ENCODE measurements at regions of chr17 and their contacts with region 1.

Region 1: GRCh38 chr17:37047631-37048104 is 98.9 kb downstream of the AATF start:
- DNase-seq: peak; percentile 92
- ATAC-seq: peak; percentile 91
- H3K4me3 Mint-ChIP-seq: no peak overlapping the region
- H3K27ac Mint-ChIP-seq: no peak overlapping the region
- H3K4me1 Mint-ChIP-seq: peaks cover 12% of the 10 kb centered on the region
- H3K27me3 Mint-ChIP-seq: no peaks in the 10 kb centered on the region

Region 2: GRCh38 chr17:36500745-36501225 is 546.9 kb before region 1 on chr17:
- CTCF ChIA-PET with region 1: no interaction called
- POLR2A ChIA-PET with region 1: no interaction called
- intact Hi-C with region 1: no loop called
- DNase-seq: no peak
- ATAC-seq: no peak
- H3K4me3 Mint-ChIP-seq: no peak overlapping the region
- H3K27ac Mint-ChIP-seq: no peak overlapping the region
- H3K4me1 Mint-ChIP-seq: no peaks in the 10 kb centered on the region
- H3K27me3 Mint-ChIP-seq: no peaks in the 10 kb centered on the region

Region 3: DNA sequence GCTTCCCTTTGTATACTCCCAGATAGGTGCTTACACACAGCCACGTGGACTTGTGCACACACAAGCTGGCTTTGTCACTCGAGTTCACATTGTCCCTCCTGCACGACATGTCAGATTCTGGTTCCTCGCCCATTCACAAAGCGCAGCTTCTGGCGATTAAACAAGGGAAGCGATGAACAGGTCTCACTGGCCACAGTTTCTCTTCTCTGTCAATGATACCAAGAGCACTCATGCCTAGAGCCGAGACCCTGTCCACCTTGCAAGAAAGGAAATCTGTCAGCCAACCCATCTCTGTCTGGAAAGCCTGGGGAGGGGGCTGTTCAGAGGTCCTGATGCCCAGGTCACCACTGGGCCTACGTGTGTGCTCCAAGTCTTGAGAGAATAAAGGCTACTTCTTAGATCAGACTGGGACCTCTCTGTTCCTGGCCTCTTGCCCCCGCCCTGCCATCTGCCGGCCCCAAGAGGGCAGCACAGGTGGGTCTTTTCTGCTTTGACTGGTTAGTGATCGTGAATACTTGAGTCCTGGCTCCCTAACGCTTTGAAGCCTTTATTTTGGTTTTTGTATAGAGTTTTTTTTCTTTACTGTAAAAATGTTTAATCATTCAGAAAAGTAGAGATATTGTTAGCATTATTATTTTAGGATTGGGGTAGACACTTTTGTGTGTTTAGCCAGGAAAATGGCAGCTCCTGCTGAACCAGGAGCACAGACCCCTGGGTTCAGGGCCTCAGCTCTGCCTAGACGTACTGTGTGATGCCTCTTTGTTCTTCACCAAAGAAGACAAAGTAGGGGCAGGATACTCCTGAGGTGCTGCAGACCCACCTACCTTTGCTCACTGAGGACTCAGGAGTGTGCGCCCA is 341.6 kb before region 1 on chr17:
- CTCF ChIA-PET with region 1: interaction called, 18 read pairs
- POLR2A ChIA-PET with region 1: no interaction called
- intact Hi-C with region 1: loop called (anchors 2 to 5 kb)
- DNase-seq: peak; percentile 78
- ATAC-seq: peak; percentile 92
- H3K4me3 Mint-ChIP-seq: no peak overlapping the region
- H3K27ac Mint-ChIP-seq: no peak overlapping the region
- H3K4me1 Mint-ChIP-seq: no peaks in the 10 kb centered on the region
- H3K27me3 Mint-ChIP-seq: peaks cover 26% of the 10 kb centered on the region

Region 4: DNA sequence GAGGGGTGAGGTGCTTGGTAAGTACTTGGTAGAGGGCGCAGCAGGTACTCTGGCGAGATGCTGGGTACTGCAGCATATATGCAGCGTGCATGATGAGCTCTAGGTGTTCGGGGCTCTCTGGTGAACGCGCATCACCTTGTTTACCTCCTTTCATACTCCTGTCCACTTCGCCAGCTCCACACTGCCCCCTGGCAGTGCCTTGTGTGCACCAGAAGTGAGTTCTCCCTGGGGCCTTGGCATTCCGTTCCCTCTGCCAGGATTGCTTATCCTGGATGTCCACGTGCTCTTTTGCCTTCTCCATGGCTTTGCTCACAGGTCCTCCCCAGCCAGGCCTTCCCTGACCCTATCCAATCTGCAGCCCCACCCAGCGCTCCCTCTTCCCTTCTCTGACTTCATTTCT is 292.1 kb before region 1 on chr17:
- CTCF ChIA-PET with region 1: interaction called, 3 read pairs
- POLR2A ChIA-PET with region 1: no interaction called
- intact Hi-C with region 1: loop called in 1 of 2 experiments (anchors 1 kb)
- DNase-seq: peak; percentile 69
- ATAC-seq: peak; percentile 51
- H3K4me3 Mint-ChIP-seq: no peak overlapping the region
- H3K27ac Mint-ChIP-seq: no peak overlapping the region
- H3K4me1 Mint-ChIP-seq: no peaks in the 10 kb centered on the region
- H3K27me3 Mint-ChIP-seq: no peaks in the 10 kb centered on the region

Region 5: GRCh38 chr17:36849871-36850348 is 197.8 kb before region 1 on chr17:
- CTCF ChIA-PET with region 1: interaction called, 3 read pairs
- POLR2A ChIA-PET with region 1: no interaction called
- intact Hi-C with region 1: loop called in 1 of 2 experiments (anchors 10 kb)
- DNase-seq: peak; percentile 81
- ATAC-seq: peak; percentile 74
- H3K4me3 Mint-ChIP-seq: peak overlapping the region; percentile 50
- H3K27ac Mint-ChIP-seq: peak overlapping the region; percentile 78
- H3K4me1 Mint-ChIP-seq: peaks cover 39% of the 10 kb centered on the region
- H3K27me3 Mint-ChIP-seq: peaks cover 9% of the 10 kb centered on the region

Region 6: DNA sequence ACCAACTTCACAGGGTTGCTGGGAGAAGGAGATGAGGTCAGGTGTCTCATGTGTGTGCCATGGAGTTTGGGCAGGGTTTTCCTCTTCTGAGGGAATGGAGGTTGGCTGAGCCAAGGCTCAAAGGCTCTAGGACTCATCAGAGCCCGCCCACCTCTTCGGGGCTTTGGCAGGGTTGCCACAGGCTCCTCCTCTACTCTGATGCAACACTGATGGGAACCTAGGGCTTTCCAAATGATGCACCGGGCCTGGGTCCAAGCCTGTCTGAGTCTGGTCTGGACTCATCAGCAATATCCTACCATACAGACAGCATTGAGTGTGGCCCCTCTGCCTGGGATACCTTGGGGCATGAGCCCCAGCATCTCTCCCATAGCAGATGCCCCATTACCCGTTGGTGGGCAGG is 169.9 kb before region 1 on chr17:
- CTCF ChIA-PET with region 1: no interaction called
- POLR2A ChIA-PET with region 1: no interaction called
- intact Hi-C with region 1: no loop called
- DNase-seq: peak; percentile 36
- ATAC-seq: peak; percentile 39
- H3K4me3 Mint-ChIP-seq: no peak overlapping the region
- H3K27ac Mint-ChIP-seq: no peak overlapping the region
- H3K4me1 Mint-ChIP-seq: peaks cover 5% of the 10 kb centered on the region
- H3K27me3 Mint-ChIP-seq: peaks cover 28% of the 10 kb centered on the region

Region 7: DNA sequence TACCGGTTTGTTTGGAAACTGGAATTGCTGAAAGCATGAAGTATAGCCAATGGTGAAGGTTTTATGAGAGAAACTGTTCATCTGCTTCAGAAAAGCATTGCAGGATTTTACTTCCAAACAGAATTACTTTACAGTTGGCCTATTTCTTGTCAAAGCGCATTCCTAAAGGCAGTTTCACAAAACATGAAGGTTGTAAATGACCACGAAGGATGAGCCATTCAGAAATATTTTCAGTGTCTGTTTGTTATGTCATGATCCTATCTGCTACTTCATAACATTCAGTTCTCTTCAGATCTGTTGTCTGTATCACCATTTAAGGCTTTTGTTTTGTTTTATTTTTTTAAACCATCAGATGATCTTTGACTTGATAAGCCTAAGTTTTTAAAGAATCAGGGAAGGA is 53.2 kb before region 1 on chr17:
- CTCF ChIA-PET with region 1: no interaction called
- POLR2A ChIA-PET with region 1: no interaction called
- intact Hi-C with region 1: no loop called
- DNase-seq: no peak
- ATAC-seq: no peak
- H3K4me3 Mint-ChIP-seq: no peak overlapping the region
- H3K27ac Mint-ChIP-seq: no peak overlapping the region
- H3K4me1 Mint-ChIP-seq: no peaks in the 10 kb centered on the region
- H3K27me3 Mint-ChIP-seq: no peaks in the 10 kb centered on the region

Region 8: GRCh38 chr17:37059493-37059892 is 11.8 kb after region 1 on chr17:
- CTCF ChIA-PET with region 1: interaction called, 10 read pairs
- POLR2A ChIA-PET with region 1: no interaction called
- intact Hi-C with region 1: no loop called
- DNase-seq: no peak
- ATAC-seq: no peak
- H3K4me3 Mint-ChIP-seq: no peak overlapping the region
- H3K27ac Mint-ChIP-seq: no peak overlapping the region
- H3K4me1 Mint-ChIP-seq: no peaks in the 10 kb centered on the region
- H3K27me3 Mint-ChIP-seq: no peaks in the 10 kb centered on the region

Region 9: GRCh38 chr17:37067555-37068111 is 20.0 kb after region 1 on chr17:
- CTCF ChIA-PET with region 1: interaction called, 13 read pairs
- POLR2A ChIA-PET with region 1: interaction called, 3 read pairs
- intact Hi-C with region 1: no loop called
- DNase-seq: no peak
- ATAC-seq: no peak
- H3K4me3 Mint-ChIP-seq: no peak overlapping the region
- H3K27ac Mint-ChIP-seq: no peak overlapping the region
- H3K4me1 Mint-ChIP-seq: no peaks in the 10 kb centered on the region
- H3K27me3 Mint-ChIP-seq: no peaks in the 10 kb centered on the region

Region 10: DNA sequence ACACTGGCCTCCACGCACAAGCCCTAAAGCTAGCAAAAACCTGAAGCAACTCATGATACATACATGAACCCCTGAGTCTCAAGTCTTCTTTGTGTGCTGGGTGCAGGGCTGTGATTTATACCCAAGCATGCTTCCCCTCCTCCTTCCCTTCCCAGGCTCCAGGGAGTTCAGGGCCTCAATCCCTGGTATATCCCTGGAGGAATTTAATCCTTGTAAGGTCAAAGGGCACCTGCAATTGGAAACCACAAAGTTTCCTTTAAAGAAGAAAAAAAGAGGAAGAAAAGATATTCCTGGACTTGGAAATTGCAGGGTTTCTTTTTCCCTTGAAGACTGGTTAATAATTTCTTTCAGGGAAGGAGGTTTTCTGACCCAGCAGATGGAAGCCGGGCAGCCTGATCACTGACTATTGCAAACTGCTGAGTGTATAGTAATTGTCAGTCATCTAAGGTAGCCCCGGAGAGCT is 83.3 kb after region 1 on chr17:
- CTCF ChIA-PET with region 1: no interaction called
- POLR2A ChIA-PET with region 1: no interaction called
- intact Hi-C with region 1: no loop called
- DNase-seq: no peak
- ATAC-seq: no peak
- H3K4me3 Mint-ChIP-seq: no peak overlapping the region
- H3K27ac Mint-ChIP-seq: no peak overlapping the region
- H3K4me1 Mint-ChIP-seq: no peaks in the 10 kb centered on the region
- H3K27me3 Mint-ChIP-seq: no peaks in the 10 kb centered on the region